OCI-LY7 (cell line): ENCODE measurements at regions of chr15 and their contacts with region 1.

Region 1: GRCh38 chr15:90143166-90143655 is 40.9 kb upstream of the IDH2 start:
- DNase-seq: peak; percentile 79
- H3K4me3 ChIP-seq: no peak overlapping the region
- H3K27ac ChIP-seq: no peak overlapping the region
- H3K4me1 ChIP-seq: peaks cover 6% of the 10 kb centered on the region
- CTCF ChIP-seq: peak; percentile 97

Region 2: GRCh38 chr15:89845305-89845893 is 297.8 kb before region 1 on chr15:
- CTCF ChIA-PET with region 1: no interaction called
- POLR2A ChIA-PET with region 1: no interaction called
- intact Hi-C with region 1: no loop called
- DNase-seq: no peak
- H3K4me3 ChIP-seq: no peak overlapping the region
- H3K27ac ChIP-seq: no peak overlapping the region
- H3K4me1 ChIP-seq: no peaks in the 10 kb centered on the region
- CTCF ChIP-seq: no peak

Region 3: DNA sequence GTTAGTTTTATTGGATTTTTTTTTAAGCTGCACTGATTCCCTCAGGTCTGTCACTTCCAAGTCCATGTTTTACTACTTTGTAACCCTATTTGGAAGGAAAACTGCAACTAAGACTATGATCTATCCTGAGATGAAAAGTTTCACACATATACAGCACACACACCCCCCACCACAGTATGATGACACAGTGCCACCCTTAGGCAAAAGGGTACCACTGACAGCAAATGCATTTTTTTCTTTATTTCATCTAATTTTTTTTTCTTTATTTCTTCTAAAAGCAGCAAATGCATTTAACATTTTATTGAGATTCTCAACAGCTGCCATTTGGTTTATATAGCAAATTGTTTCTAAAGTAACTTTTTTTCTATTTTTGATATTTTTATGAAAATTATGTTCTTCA is 143.5 kb after region 1 on chr15:
- CTCF ChIA-PET with region 1: no interaction called
- POLR2A ChIA-PET with region 1: interaction called, 6 read pairs
- intact Hi-C with region 1: loop called (anchors 5 kb)
- DNase-seq: peak; percentile 59
- H3K4me3 ChIP-seq: no peak overlapping the region
- H3K27ac ChIP-seq: no peak overlapping the region
- H3K4me1 ChIP-seq: peaks cover 4% of the 10 kb centered on the region
- CTCF ChIP-seq: peak; percentile 92